Tibial artery (tissue), 4 donors: ENCODE measurements at regions of chr12 and their contacts with region 1.

Region 1: GRCh38 chr12:3202734-3203446 is 125.7 kb downstream of the TSPAN9 start:
- DNase-seq: peak in 1 of 2 donors; percentile 53
- H3K4me3 ChIP-seq: no peak overlapping the region
- H3K27ac ChIP-seq: no peak overlapping the region
- H3K4me1 ChIP-seq: peaks cover 0 to 72% (median 62%) of the 10 kb centered on the region in 4 donors
- H3K27me3 ChIP-seq: no peaks in the 10 kb centered on the region
- CTCF ChIP-seq: peak; percentile 88 to 89

Region 2: DNA sequence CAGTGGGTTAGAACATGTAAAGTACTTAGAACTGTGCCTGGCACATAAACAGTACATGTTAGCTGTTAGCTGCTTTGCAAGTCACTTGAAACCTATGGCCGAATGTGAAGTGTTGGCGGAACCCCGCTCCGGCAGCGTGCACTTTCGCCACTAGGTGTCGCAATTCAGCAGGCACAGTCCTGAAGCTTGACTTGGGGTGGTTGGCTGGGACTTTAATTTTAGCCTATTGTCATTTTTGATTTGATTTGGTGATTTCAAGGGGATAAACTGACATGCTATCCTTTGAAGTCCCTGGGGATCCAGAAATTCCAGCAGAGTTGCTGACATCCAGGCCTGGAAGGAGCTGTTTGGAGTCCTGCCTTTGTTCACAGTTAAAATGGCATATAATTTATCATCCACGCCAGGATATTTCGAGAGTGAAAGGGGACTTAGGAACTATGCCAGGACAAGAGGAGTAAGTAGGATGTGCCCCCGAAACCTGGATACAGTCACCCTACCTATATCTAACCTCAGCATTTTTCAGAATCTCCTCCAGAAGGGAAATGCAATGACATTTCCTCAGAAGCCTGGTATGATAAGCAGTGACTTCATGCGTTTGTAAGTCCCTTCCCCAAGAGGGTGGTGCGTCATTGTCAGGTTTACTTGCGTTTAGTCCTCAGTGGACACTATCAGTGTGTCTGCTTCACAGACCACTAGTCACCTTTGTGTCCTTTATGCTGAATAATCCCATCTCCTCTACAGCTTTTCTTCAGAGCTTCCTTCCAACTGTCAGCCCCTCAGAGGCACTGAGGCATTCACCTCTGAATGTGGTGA is 129.2 kb before region 1 on chr12:
- intact Hi-C with region 1: loop called (anchors 5 kb)
- DNase-seq: peak; percentile 79 to 90
- H3K4me3 ChIP-seq: no peak overlapping the region
- H3K27ac ChIP-seq: peak overlapping the region; percentile 44 to 46
- H3K4me1 ChIP-seq: peaks cover 0 to 25% (median 21%) of the 10 kb centered on the region in 4 donors
- H3K27me3 ChIP-seq: no peaks in the 10 kb centered on the region
- CTCF ChIP-seq: peak; percentile 93 to 97

Region 3: DNA sequence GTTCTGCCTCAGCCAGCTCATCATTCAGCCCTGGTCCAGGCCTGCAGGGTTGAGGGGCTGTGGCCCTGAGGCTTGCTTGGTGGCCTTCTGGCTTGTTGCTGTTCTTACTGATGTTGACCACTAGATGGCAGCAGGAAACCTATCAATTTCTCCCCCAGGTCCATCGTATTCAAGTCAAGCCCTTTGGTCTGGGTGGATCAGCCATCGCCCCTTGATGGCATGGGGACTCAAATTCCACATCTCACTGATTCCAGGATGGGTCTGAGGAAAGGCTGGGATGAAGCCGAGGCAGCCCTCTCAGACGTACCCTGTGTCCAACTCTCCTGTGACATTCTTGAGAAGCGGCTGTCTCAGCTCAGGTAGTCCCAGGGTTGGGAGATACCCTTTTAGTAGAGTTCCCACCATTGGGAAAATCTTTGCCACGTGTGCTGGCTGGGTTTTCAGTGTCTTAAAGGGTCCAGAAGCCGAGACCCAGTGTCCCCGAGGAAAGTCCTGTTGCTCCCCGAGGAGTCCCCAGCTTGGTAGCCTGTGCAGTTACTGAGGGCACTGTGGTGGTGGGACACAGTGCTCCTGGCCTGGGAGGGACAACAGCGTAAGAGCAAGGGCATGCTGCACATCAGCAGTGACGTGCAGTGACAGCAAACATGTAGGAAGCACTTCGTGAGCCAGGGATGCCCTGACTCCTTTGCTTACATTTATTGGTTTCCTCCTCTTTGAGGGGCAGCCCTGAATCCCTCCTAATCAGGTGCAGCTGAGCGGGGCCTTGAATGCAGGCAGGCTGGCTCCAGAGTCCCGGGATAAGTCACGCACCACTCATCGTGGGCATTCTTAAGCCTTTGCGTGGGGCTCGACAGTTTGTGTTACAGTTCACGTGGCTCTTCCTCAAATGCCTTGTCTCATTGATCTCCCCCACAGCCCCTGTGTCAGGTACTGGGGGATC is 67.1 kb before region 1 on chr12:
- intact Hi-C with region 1: loop called (anchors 2 kb)
- DNase-seq: peak in 1 of 2 donors; percentile 40
- H3K4me3 ChIP-seq: no peak overlapping the region
- H3K27ac ChIP-seq: no peak overlapping the region
- H3K4me1 ChIP-seq: peaks cover 0 to 62% (median 31%) of the 10 kb centered on the region in 4 donors
- H3K27me3 ChIP-seq: no peaks in the 10 kb centered on the region
- CTCF ChIP-seq: peak; percentile 76 to 91

Region 4: GRCh38 chr12:3261782-3262359 is 59.0 kb after region 1 on chr12:
- intact Hi-C with region 1: loop called (anchors 5 kb)
- DNase-seq: peak; percentile 41 to 76
- H3K4me3 ChIP-seq: no peak overlapping the region
- H3K27ac ChIP-seq: peak overlapping the region; percentile 55 to 63
- H3K4me1 ChIP-seq: peaks cover 0 to 58% (median 16%) of the 10 kb centered on the region in 4 donors
- H3K27me3 ChIP-seq: no peaks in the 10 kb centered on the region
- CTCF ChIP-seq: peak; percentile 38 to 59